Activated naive CD4-positive, alpha-beta T cell treated with anti-CD3 and anti-CD28 coated beads for 36 hours (primary cell): ENCODE measurements at regions of chr14 and their contacts with region 1.

Region 1: GRCh38 chr14:35404449-35405303 is at the start of gene NFKBIA:
- DNase-seq: peak; percentile 96
- H3K4me3 Mint-ChIP-seq: peak within 1 kb of the TSS; percentile 98
- H3K27ac Mint-ChIP-seq: peak within 1 kb of the TSS; percentile 99
- H3K4me1 Mint-ChIP-seq: peaks cover 31% of the 10 kb centered on the region
- H3K27me3 Mint-ChIP-seq: no peaks in the 10 kb centered on the region
- total RNA-seq, gene NFKBIA: 289 to 293 TPM

Region 2: DNA sequence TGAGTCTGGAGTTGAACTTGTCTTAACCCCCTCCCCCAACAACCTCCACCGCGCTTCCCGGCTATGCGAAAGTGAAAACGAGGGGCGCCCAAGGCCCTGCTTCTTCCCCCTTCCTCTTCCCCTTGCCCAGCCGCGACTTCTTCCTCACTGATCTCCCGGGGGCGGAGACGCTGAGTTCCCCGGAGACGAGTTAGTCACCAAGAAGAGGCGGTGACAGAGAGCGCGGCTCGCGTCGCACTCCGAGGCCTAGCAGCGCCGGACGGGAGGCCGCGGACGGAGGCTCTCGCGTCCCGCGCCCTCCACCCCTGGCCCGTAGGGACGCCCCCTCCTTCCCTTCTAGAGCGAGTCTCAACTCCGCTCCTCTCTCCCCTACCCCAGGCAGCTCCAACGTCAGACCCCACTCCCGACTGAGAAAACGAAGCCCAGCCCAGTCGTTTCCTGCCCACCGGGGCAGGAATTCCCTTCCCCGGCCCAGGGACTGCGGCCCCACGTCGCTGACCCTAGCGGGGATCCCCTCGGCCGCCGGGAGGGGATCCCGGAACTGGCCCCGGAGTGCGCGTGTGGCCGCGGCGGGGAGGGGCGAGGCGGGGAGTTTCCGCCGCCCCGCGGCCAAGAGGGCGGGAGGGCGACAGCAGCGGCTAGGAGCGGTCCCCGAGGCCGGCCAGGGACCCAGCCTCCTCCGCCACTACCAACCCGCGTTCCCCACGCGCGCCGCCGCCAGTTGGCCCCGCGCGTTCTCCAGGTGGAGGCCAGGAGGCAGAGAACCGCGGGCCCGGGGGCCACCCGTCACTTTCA is 530.9 kb before region 1 on chr14:
- CTCF ChIA-PET with region 1: no interaction called
- intact Hi-C with region 1: loop called (anchors 1 kb)
- DNase-seq: peak; percentile 95
- H3K4me3 Mint-ChIP-seq: peak overlapping the region; percentile 89
- H3K27ac Mint-ChIP-seq: peak overlapping the region; percentile 98
- H3K4me1 Mint-ChIP-seq: peaks cover 35% of the 10 kb centered on the region
- H3K27me3 Mint-ChIP-seq: no peaks in the 10 kb centered on the region

Region 3: GRCh38 chr14:35121887-35122695 is 282.6 kb before region 1 on chr14 and contains the starts of genes PPP2R3C and PRORP:
- CTCF ChIA-PET with region 1: interaction called, 3 read pairs
- intact Hi-C with region 1: loop called (anchors 1 kb)
- DNase-seq: peak; percentile 93
- H3K4me3 Mint-ChIP-seq: peak within 1 kb of the TSS; percentile 95
- H3K27ac Mint-ChIP-seq: peak within 1 kb of the TSS; percentile 99
- H3K4me1 Mint-ChIP-seq: peaks cover 64% of the 10 kb centered on the region
- H3K27me3 Mint-ChIP-seq: no peaks in the 10 kb centered on the region
- total RNA-seq, gene PPP2R3C: 44.5 to 47.5 TPM
- total RNA-seq, gene PRORP: 37.9 to 40.8 TPM

Region 4: GRCh38 chr14:35223927-35224326 is 180.7 kb before region 1 on chr14:
- CTCF ChIA-PET with region 1: interaction called, 40 read pairs
- intact Hi-C with region 1: loop called (anchors 1 kb)
- DNase-seq: no peak
- H3K4me3 Mint-ChIP-seq: no peak overlapping the region
- H3K27ac Mint-ChIP-seq: no peak overlapping the region
- H3K4me1 Mint-ChIP-seq: peaks cover 26% of the 10 kb centered on the region
- H3K27me3 Mint-ChIP-seq: no peaks in the 10 kb centered on the region

Region 5: GRCh38 chr14:35292051-35292769 is 112.5 kb before region 1 on chr14 and contains the start of gene PSMA6:
- CTCF ChIA-PET with region 1: interaction called, 30 read pairs
- intact Hi-C with region 1: loop called (anchors 1 kb)
- DNase-seq: peak; percentile 99
- H3K4me3 Mint-ChIP-seq: peak within 1 kb of the TSS; percentile 98
- H3K27ac Mint-ChIP-seq: peak within 1 kb of the TSS; percentile 97
- H3K4me1 Mint-ChIP-seq: peaks cover 53% of the 10 kb centered on the region
- H3K27me3 Mint-ChIP-seq: no peaks in the 10 kb centered on the region
- total RNA-seq, gene PSMA6: 433 to 437 TPM

Region 6: GRCh38 chr14:35365130-35366055 is 39.3 kb before region 1 on chr14:
- CTCF ChIA-PET with region 1: interaction called, 13 read pairs
- intact Hi-C with region 1: loop called (anchors 1 kb)
- DNase-seq: peak; percentile 94
- H3K4me3 Mint-ChIP-seq: no peak overlapping the region
- H3K27ac Mint-ChIP-seq: peak overlapping the region; percentile 92
- H3K4me1 Mint-ChIP-seq: peaks cover 60% of the 10 kb centered on the region
- H3K27me3 Mint-ChIP-seq: no peaks in the 10 kb centered on the region